Transverse colon (tissue), 4 donors: ENCODE measurements at regions of chr3 and their contacts with region 1.

Region 1: GRCh38 chr3:194671900-194672808 is at the start of gene LSG1:
- DNase-seq: peak; percentile 94
- H3K4me3 ChIP-seq: peak within 1 kb of the TSS; percentile 62 to 87 (median 69)
- H3K27ac ChIP-seq: peak within 1 kb of the TSS; percentile 84 to 92 (median 90)
- H3K4me1 ChIP-seq: peaks cover 13 to 23% (median 14%) of the 10 kb centered on the region in 4 donors
- H3K27me3 ChIP-seq: peaks cover 3% of the 10 kb centered on the region
- CTCF ChIP-seq: no peak
- EP300 ChIP-seq: no peak
- POLR2A ChIP-seq: peak; percentile 51
- total RNA-seq, gene LSG1: 18.7 to 69.9 (median 52.8) TPM

Region 2: GRCh38 chr3:194773216-194773615 is 101.1 kb after region 1 on chr3:
- in situ Hi-C with region 1: no loop called
- intact Hi-C with region 1: no loop called
- DNase-seq: peak; percentile 41
- H3K4me3 ChIP-seq: no peak overlapping the region
- H3K27ac ChIP-seq: peak overlapping the region in 1 of 4 donors; percentile 26
- H3K4me1 ChIP-seq: peaks cover 3 to 24% (median 20%) of the 10 kb centered on the region in 4 donors
- H3K27me3 ChIP-seq: no peaks in the 10 kb centered on the region
- CTCF ChIP-seq: no peak
- EP300 ChIP-seq: no peak
- POLR2A ChIP-seq: no peak

Region 3: GRCh38 chr3:195117978-195118581 is 445.9 kb after region 1 on chr3:
- in situ Hi-C with region 1: loop called in 1 of 4 experiments (anchors 10 kb)
- intact Hi-C with region 1: no loop called
- DNase-seq: peak; percentile 56
- H3K4me3 ChIP-seq: no peak overlapping the region
- H3K27ac ChIP-seq: no peak overlapping the region
- H3K4me1 ChIP-seq: peaks cover 2 to 9% (median 4%) of the 10 kb centered on the region in 4 donors
- H3K27me3 ChIP-seq: no peaks in the 10 kb centered on the region
- CTCF ChIP-seq: no peak
- EP300 ChIP-seq: no peak
- POLR2A ChIP-seq: no peak

Region 4: DNA sequence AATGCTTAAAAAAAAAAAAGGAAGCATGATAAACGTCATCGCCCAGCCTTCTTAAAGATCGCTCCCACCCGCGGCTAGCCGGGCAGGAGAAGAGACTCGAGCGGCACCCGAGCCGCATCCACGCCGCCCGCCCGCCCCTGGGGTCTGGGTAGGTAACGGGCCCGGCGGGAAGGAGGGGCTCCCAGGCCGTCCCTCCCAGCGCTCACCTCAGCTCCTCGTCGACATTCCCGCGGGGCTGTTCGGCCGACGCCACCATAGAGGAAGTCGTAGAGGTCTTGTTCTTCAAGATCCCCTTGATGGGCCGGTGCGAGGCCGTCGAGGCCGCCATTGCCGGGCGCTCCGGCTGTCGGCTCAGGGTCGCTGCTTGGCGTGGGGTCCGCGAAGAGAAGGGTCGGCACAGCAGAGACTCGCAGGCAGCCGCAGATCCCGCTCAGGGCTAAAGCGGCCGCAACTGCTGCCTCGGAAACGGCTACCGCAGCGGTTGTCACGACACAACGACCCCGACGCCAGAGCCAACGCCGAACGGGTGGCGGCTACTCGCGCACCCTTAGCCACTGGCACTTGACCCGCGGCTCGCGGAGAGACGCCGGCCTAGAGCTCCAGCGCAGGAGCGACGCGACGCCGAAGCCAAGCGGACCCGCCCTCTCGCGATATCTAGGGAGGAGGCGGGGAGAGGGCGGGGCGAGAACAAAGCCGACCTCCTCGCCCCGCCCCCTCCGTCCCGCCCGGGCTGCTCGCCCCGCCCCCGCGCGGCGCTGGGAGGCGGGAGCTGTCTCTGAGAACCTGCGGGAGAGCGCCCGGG is 870.7 kb after region 1 on chr3 and contains the start of gene PPP1R2:
- in situ Hi-C with region 1: loop called in 3 of 4 experiments (anchors 25 kb)
- intact Hi-C with region 1: no loop called
- DNase-seq: peak; percentile 95
- H3K4me3 ChIP-seq: peak within 1 kb of the TSS; percentile 73 to 94 (median 82)
- H3K27ac ChIP-seq: peak within 1 kb of the TSS; percentile 94 to 98 (median 96)
- H3K4me1 ChIP-seq: peaks cover 11 to 68% (median 41%) of the 10 kb centered on the region in 4 donors
- H3K27me3 ChIP-seq: no peaks in the 10 kb centered on the region
- CTCF ChIP-seq: no peak
- EP300 ChIP-seq: no peak
- POLR2A ChIP-seq: peak; percentile 97
- total RNA-seq, gene PPP1R2: 50.7 to 143 (median 59.4) TPM